Left cardiac atrium (tissue), 4 donors: ENCODE measurements at regions of chr15 and their contacts with region 1.

Region 1: GRCh38 chr15:40274350-40275274 is 8.3 kb downstream of the ANKRD63 start:
- DNase-seq: peak; percentile 81
- ATAC-seq: peak; percentile 36 to 46

Region 2: GRCh38 chr15:40217159-40217824 is 57.3 kb before region 1 on chr15:
- intact Hi-C with region 1: loop called (anchors 1 to 5 kb)
- DNase-seq: no peak
- ATAC-seq: peak; percentile 90 to 93

Region 3: DNA sequence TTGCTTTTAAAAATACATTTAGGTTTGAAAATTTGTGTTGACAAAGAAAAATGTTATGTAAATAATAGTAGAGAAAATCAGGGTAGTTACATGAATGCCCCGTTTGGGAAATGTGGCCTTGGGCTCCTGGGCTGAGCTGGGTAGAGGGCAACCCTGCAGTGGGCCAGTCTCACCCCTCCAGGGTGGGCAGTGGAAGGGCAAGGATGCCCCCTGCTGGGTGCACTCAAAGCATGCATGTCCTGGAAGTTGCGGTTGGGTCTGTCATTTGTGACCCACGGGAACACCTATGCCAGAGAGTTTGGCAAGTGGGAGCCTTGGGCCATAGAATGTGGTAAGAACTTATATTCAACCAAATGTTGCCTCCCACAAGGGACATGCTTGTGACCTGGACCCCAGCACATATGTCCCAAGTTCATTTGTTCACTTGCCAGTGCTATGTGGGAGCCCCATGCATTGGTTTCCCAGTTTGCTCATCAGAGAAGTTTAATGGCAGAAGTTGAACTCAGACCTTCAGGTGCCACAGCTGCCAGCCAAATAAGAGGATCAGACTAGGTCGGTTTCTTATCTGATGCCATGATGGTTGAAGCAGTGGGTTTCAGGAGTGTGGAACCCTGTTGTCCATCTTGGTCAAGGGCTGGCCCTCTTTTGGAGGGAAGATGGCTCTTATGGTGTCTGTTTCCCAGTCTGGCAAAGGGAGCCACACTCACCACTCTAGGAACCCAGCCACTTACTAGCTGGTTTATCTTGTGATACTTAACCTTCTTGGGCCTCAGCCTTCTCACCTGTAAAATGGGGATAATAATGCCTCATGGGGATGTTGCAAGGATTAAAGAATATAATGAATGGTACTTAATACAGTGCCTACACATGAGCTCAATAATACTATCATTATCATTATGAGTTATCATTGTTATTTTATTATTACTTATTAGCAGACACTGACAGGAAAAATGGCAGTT is 35.7 kb after region 1 on chr15:
- intact Hi-C with region 1: loop called in 1 of 2 experiments (anchors 2 kb)
- DNase-seq: peak; percentile 62
- ATAC-seq: peak; percentile 51 to 66